Mammary epithelial cell (primary cell): ENCODE measurements at regions of chr16 and their contacts with region 1.

Region 1: DNA sequence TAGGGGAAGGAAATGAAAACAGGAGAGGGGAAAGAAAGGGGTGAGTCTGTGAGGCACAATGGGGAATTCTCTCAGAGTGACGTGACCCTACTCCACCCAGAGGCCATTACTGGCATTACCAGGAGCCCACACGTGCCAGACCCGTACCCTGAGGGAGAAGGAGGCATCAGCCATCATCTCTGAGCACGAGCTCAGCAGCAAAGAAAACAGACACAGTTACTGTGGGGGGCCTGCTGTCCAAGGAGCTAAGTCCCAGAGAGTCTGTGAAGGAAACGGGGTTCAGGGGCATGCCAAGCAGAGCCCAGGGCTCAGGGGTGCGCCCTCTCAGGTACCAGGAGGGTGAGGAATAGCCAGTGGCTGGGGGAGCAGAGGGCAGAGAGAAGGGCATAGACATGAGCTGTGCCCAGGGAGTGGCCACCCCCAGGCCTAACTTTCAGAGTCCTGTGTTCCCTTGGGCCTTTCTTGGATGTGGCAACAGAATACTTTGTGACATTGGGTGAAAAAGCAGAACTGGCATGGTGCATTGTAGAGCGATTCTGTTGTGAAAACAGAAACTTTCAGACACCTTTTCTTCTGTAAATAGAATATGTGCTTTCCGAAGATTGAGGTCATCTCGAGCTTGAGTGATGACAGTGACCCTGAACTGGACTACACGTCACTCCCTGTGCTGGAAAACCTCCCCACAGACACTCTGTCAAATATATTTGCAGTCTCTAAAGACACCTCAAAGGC is 11.3 kb downstream of the TAF1C start:
- DNase-seq: peak; percentile 55
- H3K4me3 ChIP-seq: no peak overlapping the region
- H3K27ac ChIP-seq: no peak overlapping the region
- H3K4me1 ChIP-seq: peaks cover 6% of the 10 kb centered on the region
- H3K27me3 ChIP-seq: no peaks in the 10 kb centered on the region
- CTCF ChIP-seq: peak; percentile 84 to 89

Region 2: DNA sequence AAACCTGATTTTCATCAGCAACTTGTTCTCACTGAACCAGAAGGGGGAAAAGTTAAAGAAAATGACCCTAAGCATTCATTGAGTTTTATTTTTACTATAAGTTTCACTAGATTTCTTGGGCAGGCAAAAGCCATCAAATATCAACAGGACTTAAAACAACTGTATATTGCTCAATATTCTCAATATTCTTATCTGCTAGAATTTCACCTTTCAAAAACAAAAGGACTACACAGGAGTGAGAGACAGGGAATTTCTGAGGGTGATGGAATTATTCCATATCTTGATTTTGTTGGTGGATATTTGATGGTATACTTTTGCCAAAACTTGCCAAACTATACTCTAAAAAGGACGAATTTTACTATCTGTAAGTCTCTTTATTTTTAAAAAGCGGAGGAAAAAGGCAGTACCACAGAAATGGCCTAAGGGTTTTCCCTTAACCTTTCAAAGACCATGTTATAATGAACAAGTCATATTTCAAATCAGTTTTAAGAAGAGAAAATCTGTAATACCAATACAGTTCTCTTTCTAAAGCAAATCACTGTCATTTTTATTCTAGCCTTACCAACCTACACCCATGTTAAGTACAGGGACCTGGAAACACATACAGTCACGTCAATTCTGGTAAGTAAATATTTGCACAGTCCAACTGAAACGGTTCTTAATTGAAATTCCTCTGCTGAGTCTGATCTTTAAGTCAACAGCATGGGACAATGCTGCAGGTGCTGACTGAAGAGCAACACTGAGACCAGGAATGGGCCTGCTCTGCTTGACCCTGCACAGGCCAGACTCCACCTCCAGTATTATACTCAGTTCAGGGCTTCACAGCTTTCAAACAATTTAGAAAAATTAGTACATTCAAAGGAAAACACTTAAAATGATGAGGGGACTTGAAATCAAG is 79.2 kb before region 1 on chr16:
- CTCF ChIA-PET with region 1: interaction called, 10 read pairs
- dilution Hi-C with region 1: no loop called
- in situ Hi-C with region 1: no loop called
- intact Hi-C with region 1: no loop called
- DNase-seq: no peak
- H3K4me3 ChIP-seq: no peak overlapping the region
- H3K27ac ChIP-seq: no peak overlapping the region
- H3K4me1 ChIP-seq: peaks cover 7% of the 10 kb centered on the region
- H3K27me3 ChIP-seq: no peaks in the 10 kb centered on the region
- CTCF ChIP-seq: no peak

Region 3: DNA sequence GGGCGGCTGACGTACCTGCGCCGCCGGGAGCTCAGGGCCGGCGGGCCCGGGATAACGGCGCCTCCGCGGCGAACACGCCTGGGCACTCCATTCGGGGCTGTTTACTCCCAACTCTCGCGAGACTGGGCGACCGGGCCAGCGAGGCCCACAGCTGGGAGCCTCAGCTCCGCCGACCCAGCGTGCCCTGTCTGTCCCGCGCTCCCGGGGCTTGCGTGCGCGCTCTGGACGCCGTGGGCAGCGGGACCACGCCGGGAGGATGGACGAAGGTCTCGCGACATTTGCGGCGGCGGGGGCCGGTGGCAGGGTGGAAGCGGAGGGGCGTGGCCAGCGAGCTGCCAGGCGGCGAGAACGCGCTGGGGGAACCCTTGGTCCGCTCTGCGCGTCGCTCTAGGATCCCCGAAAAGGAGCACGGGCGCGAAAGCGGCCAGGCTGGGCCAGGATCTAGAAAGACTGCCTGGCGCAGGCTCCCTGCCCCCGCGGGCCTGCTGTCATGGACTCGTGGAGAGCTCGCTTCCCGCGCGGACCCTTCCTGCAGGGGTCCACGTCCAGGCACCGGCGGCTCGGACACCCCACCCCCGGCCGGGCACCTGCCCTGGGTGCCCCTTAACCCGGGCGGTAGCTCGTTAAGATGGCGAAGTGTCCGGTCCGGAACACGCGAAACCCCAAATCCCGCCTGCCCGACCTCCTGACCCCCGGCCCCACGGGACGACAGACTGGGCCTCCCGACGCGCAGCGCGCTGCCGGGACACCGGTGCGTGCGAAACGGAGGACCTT is 58.6 kb before region 1 on chr16 and contains the start of gene MBTPS1:
- CTCF ChIA-PET with region 1: no interaction called
- dilution Hi-C with region 1: no loop called
- in situ Hi-C with region 1: loop called in 1 of 2 experiments (anchors 5 kb)
- intact Hi-C with region 1: no loop called
- DNase-seq: peak; percentile 98
- H3K4me3 ChIP-seq: peak within 1 kb of the TSS; percentile 73 to 97 (median 86)
- H3K27ac ChIP-seq: peak within 1 kb of the TSS; percentile 83
- H3K4me1 ChIP-seq: peaks cover 7% of the 10 kb centered on the region
- H3K27me3 ChIP-seq: no peaks in the 10 kb centered on the region
- CTCF ChIP-seq: no peak
- total RNA-seq, gene MBTPS1: 65.0 to 101 TPM